ENCODE measurements at regions of chr1 and their contacts with region 1.

Region 1: DNA sequence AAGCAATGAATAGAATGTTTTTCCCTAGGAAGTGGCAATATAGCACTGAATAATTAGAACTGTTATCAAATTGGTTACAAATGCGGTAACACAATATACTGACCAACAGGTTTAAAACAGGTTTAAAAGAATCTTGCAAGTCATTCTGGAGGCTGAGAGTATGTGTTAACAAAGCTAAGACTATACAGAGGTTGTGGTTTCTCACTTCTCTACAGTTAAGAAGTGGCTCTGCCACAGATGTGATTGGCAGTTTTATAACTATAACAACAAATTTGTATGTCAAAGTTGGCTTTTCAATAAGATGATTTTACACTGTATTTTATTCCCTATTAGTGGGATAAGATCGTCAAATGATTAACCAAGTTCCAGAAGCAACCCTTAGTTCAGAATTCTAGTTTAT is 7.1 kb downstream of the ANGEL2 start:
- DNase-seq: peak; percentile 29
- CTCF ChIP-seq: no peak

Region 2: DNA sequence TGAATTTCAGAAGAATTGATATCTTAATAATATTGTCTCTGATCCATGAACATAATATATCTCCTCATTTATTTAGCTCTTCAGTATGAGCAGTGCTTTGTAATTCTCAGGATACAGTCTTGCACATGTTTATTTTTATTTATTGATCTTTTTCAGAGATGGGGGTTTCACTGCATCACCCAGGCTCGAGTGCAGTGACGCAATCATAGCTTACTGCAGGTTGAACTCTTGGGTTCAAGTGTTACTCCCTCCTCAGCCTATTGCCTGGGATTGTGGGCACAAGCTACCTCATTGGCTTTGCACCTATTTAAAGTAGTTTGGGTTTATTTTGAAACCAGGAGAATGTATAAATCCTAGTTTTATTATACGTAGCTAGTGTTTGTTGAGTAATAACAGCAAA is 47.2 kb after region 1 on chr1:
- CTCF ChIA-PET with region 1: no interaction called
- POLR2A ChIA-PET with region 1: interaction called, 10 read pairs
- DNase-seq: no peak
- CTCF ChIP-seq: no peak

Measured in GM10248 (cell line).